ENCODE measurements at regions of chr1 and their contacts with region 1.

Region 1: GRCh38 chr1:15885701-15886610 is 38.4 kb downstream of the SPEN start:
- DNase-seq: peak; percentile 86
- H3K4me3 ChIP-seq: peak overlapping the region; percentile 14 to 34 (median 28)
- H3K27ac ChIP-seq: peak overlapping the region; percentile 35
- H3K4me1 ChIP-seq: peaks cover 18% of the 10 kb centered on the region
- H3K27me3 ChIP-seq: no peaks in the 10 kb centered on the region
- CTCF ChIP-seq: peak; percentile 15 to 32

Region 2: DNA sequence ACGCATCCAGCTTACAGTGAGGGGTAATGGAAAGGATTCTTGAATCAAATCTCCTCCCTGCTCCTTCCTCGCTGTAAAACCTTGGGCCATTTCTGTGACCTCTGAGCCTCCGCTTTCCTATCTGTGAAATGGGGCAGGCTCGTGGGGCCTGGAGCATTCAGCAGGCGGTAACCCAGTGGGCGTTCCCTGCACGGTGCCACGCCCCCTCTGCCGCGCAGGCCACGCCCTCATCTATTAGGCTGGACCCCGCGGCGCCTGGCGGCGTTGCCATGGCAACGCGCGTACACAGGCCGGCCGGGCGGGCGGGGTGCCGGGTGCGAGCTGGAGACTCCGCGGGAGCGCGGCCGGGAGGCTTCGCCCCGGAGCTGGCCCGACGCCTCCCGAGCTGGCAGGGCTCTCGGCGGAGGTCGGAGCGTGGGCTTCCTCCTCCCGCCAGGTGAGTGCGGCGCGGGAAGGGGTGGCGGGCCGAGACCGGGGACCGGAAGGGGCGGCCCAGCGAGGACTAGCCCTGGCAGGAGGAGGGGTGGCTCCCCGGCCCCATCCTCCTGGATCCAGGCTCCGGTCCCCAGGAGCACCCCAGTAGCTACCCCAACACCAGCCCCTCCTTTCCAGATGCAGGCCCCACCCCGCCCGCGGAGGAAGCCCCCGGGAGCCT is 638.9 kb before region 1 on chr1 and contains the start of gene FHAD1:
- CTCF ChIA-PET with region 1: no interaction called
- dilution Hi-C with region 1: no loop called
- in situ Hi-C with region 1: no loop called
- intact Hi-C with region 1: no loop called
- DNase-seq: peak; percentile 62
- H3K4me3 ChIP-seq: peak within 1 kb of the TSS; percentile 11 to 48 (median 43)
- H3K27ac ChIP-seq: no peak within 1 kb of the TSS
- H3K4me1 ChIP-seq: peaks cover 4% of the 10 kb centered on the region
- H3K27me3 ChIP-seq: no peaks in the 10 kb centered on the region
- CTCF ChIP-seq: no peak
- total RNA-seq, gene FHAD1: 0.12 to 0.33 TPM

Region 3: GRCh38 chr1:15975805-15976680 is 90.1 kb after region 1 on chr1 and contains the start of gene ZBTB17:
- CTCF ChIA-PET with region 1: no interaction called
- dilution Hi-C with region 1: loop called (anchors 5 kb)
- in situ Hi-C with region 1: no loop called
- intact Hi-C with region 1: no loop called
- DNase-seq: peak; percentile 87
- H3K4me3 ChIP-seq: peak within 1 kb of the TSS; percentile 61 to 70 (median 62)
- H3K27ac ChIP-seq: peak within 1 kb of the TSS; percentile 52
- H3K4me1 ChIP-seq: peaks cover 8% of the 10 kb centered on the region
- H3K27me3 ChIP-seq: no peaks in the 10 kb centered on the region
- CTCF ChIP-seq: no peak
- total RNA-seq, gene ZBTB17: 26.2 to 36.6 TPM